ENCODE measurements at regions of chr12 and their contacts with region 1.

Region 1: GRCh38 chr12:48777501-48778400 is 11.1 kb downstream of the ADCY6 start:
- DNase-seq: no peak
- ATAC-seq: no peak
- H3K4me3 ChIP-seq: no peak overlapping the region
- H3K4me3 Mint-ChIP-seq: no peak overlapping the region
- H3K27ac ChIP-seq: no peak overlapping the region
- H3K27ac Mint-ChIP-seq: peak overlapping the region; percentile 39
- H3K4me1 ChIP-seq: no peaks in the 10 kb centered on the region
- H3K4me1 Mint-ChIP-seq: no peaks in the 10 kb centered on the region
- H3K27me3 ChIP-seq: peaks cover 0 to 3% (median 0%) of the 10 kb centered on the region in 4 experiments
- H3K27me3 Mint-ChIP-seq: peaks cover 7% of the 10 kb centered on the region
- CTCF ChIP-seq: no peak

Region 2: DNA sequence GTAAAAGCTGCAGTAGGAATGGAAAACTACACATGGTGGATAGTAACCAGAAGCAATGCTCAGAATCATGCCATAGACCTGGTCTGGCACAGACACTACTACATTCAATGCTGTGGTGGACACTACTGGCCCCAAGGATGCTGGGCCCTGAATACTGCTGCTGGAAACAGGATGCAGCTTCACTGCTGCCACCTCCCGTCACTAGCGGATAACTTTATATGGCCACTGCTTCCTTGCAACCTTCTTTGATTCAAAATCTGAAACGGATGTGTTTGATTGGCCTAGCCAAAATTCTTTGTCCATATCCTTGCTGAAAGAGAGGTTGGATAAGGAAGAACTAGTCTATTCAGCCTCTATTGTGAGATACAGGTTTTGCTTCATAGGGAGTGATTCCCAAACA is 19.5 kb before region 1 on chr12:
- CTCF ChIA-PET with region 1: interaction called, 11 read pairs
- POLR2A ChIA-PET with region 1: no interaction called
- intact Hi-C with region 1: no loop called
- DNase-seq: no peak
- ATAC-seq: no peak
- H3K4me3 ChIP-seq: no peak overlapping the region
- H3K4me3 Mint-ChIP-seq: no peak overlapping the region
- H3K27ac ChIP-seq: no peak overlapping the region
- H3K27ac Mint-ChIP-seq: no peak overlapping the region
- H3K4me1 ChIP-seq: no peaks in the 10 kb centered on the region
- H3K4me1 Mint-ChIP-seq: no peaks in the 10 kb centered on the region
- H3K27me3 ChIP-seq: no peaks in the 10 kb centered on the region
- H3K27me3 Mint-ChIP-seq: no peaks in the 10 kb centered on the region
- CTCF ChIP-seq: no peak

Measured in B cell (primary cell).